CD8-positive, alpha-beta T cell (primary cell): ENCODE measurements at regions of chr5 and their contacts with region 1.

Region 1: DNA sequence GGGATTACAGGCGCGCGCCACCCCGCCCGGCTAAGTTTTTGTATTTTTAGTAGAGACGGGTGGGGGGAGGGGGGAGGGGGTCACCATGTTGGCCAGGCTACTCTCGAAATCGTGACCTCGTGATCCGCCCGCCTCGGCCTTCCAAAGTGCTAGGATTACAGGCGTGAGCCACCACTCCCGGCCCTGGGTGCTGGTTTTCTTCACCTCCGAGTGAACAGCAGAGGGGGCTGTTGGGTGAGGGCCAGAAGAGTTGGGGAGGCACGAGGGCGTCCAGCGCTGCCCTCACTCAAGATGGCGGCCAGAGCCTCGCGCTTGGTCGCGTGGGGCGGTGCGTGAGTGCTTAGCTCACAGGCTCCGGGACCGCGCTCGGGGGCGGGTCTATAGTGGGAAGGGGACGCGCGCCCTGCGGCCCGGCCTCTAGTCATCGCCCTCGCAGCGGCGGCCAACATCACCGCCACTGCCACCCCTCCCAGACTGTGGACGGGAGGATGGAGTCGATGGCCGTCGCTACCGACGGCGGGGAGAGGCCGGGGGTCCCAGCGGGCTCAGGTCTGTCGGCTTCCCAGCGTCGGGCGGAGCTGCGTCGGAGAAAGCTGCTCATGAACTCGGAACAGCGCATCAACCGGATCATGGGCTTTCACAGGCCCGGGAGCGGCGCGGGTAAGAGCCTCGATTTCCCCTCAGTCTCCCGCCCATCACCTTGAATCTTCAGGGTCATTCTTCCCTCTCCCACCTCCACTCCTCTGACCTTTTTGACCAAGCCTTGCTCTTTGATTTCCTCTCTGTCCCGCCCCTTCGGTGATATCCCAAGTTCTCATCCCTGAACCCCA is at the start of gene CAMLG:
- DNase-seq: peak; percentile 94 to 99 (median 97)
- ATAC-seq: peak; percentile 97
- H3K4me3 ChIP-seq: peak within 1 kb of the TSS; percentile 89 to 91
- H3K4me3 Mint-ChIP-seq: peak within 1 kb of the TSS; percentile 86
- H3K27ac ChIP-seq: peak within 1 kb of the TSS; percentile 79 to 92
- H3K27ac Mint-ChIP-seq: peak within 1 kb of the TSS; percentile 95
- H3K4me1 ChIP-seq: peaks cover 20% of the 10 kb centered on the region
- H3K4me1 Mint-ChIP-seq: peaks cover 35% of the 10 kb centered on the region
- H3K27me3 ChIP-seq: no peaks in the 10 kb centered on the region
- H3K27me3 Mint-ChIP-seq: no peaks in the 10 kb centered on the region
- CTCF ChIP-seq: peak; percentile 81
- total RNA-seq, gene CAMLG: 52.3 to 56.2 TPM

Region 2: GRCh38 chr5:133968049-133968980 is 770.0 kb before region 1 on chr5 and contains the start of gene C5orf15:
- CTCF ChIA-PET with region 1: no interaction called
- POLR2A ChIA-PET with region 1: no interaction called
- intact Hi-C with region 1: loop called (anchors 10 kb)
- DNase-seq: peak; percentile 76 to 98 (median 91)
- ATAC-seq: peak; percentile 93
- H3K4me3 ChIP-seq: peak within 1 kb of the TSS; percentile 85 to 93
- H3K4me3 Mint-ChIP-seq: peak within 1 kb of the TSS; percentile 93
- H3K27ac ChIP-seq: peak within 1 kb of the TSS; percentile 79 to 94
- H3K27ac Mint-ChIP-seq: peak within 1 kb of the TSS; percentile 97
- H3K4me1 ChIP-seq: peaks cover 23% of the 10 kb centered on the region
- H3K4me1 Mint-ChIP-seq: peaks cover 49% of the 10 kb centered on the region
- H3K27me3 ChIP-seq: no peaks in the 10 kb centered on the region
- H3K27me3 Mint-ChIP-seq: no peaks in the 10 kb centered on the region
- CTCF ChIP-seq: no peak
- total RNA-seq, gene C5orf15: 12.4 to 13.0 TPM

Region 3: GRCh38 chr5:134637161-134637582 is 101.2 kb before region 1 on chr5:
- CTCF ChIA-PET with region 1: no interaction called
- POLR2A ChIA-PET with region 1: interaction called, 6 read pairs
- intact Hi-C with region 1: loop called (anchors 1 to 2 kb)
- DNase-seq: no peak
- ATAC-seq: no peak
- H3K4me3 ChIP-seq: no peak overlapping the region
- H3K4me3 Mint-ChIP-seq: no peak overlapping the region
- H3K27ac ChIP-seq: no peak overlapping the region
- H3K27ac Mint-ChIP-seq: no peak overlapping the region
- H3K4me1 ChIP-seq: no peaks in the 10 kb centered on the region
- H3K4me1 Mint-ChIP-seq: peaks cover under 1% of the 10 kb centered on the region
- H3K27me3 ChIP-seq: no peaks in the 10 kb centered on the region
- H3K27me3 Mint-ChIP-seq: no peaks in the 10 kb centered on the region
- CTCF ChIP-seq: no peak

Region 4: DNA sequence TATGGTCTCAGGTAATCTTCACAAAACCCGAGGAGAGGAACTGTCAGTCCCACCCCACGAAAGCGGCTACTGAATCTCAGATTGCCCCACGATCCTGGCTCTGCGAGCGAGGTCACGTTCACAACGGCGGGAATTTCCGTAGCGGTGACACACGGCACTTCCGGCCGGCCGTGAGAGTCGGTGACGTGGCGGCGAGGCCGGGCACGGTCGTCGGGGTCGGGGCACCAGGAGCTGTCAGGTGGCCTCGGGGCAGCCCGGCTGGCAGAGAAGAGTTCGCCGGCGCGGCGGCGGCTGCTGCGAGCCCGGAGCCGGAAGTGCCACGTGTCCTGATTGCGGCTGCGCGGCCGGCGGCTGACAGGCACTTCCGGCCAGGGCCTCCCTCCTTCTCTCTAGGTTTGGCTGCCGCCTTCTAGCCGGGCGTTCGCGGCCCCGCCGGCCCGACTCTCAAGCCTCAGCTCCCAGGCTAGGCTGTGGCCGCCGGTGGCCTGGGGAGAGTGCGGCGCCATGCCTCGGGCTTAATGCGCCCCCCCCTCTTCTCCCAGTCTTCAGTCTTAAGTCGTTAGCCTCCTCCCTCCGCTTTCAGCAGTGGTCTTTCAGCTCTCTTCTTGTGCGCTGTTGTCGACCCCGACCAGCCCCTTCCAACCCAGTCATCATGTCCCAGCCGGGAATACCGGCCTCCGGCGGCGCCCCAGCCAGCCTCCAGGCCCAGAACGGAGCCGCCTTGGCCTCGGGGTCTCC is 89.8 kb before region 1 on chr5 and contains the start of gene SEC24A:
- CTCF ChIA-PET with region 1: no interaction called
- POLR2A ChIA-PET with region 1: no interaction called
- intact Hi-C with region 1: loop called (anchors 1 to 5 kb)
- DNase-seq: peak; percentile 75 to 98 (median 88)
- ATAC-seq: peak; percentile 77
- H3K4me3 ChIP-seq: peak within 1 kb of the TSS; percentile 74 to 98
- H3K4me3 Mint-ChIP-seq: peak within 1 kb of the TSS; percentile 96
- H3K27ac ChIP-seq: peak within 1 kb of the TSS; percentile 83 to 100
- H3K27ac Mint-ChIP-seq: peak within 1 kb of the TSS; percentile 99
- H3K4me1 ChIP-seq: peaks cover 12% of the 10 kb centered on the region
- H3K4me1 Mint-ChIP-seq: peaks cover 30% of the 10 kb centered on the region
- H3K27me3 ChIP-seq: no peaks in the 10 kb centered on the region
- H3K27me3 Mint-ChIP-seq: no peaks in the 10 kb centered on the region
- CTCF ChIP-seq: no peak
- total RNA-seq, gene SEC24A: 14.4 to 14.5 TPM

Region 5: DNA sequence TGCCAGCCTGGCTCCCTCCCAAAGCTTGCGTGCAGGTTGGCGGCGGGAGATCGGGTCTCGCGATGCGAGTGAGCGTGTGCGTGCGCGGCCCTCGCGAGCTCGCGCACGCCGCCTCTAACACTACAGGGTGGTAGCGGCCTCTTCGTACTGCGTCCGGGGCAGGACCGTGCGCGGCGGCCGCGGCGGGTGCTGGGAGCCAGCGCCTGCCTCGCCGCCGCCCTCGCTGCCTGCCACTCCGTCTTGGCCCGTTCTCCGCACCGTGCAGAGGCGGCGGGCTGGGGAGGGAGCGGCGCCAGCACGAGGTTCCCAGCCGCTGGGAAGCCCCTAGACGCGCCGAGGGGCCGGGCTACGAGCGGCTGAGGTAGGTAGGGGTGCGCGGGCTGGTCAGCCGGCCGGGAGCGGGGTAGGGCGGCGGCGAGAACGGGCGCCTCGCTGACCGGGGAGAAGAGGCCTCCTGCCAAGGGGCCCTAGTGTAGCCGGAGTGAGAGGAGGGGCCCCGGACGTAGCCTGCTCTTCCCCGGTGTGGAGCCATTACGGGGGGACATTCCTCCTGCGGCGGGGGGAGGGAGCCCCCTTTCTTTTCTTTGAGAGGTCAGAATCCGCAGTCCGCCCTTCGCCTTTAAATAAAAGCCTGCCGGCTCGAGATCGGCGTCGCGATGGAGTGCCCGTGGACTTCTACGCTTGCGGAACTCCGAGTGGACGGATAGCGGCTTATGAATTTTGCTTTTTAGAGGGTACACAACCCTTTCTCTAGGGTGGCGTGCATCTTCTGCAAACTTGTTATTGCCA is 107.7 kb after region 1 on chr5 and contains the start of gene C5orf24:
- CTCF ChIA-PET with region 1: interaction called, 5 read pairs
- POLR2A ChIA-PET with region 1: interaction called, 8 read pairs
- intact Hi-C with region 1: loop called (anchors 1 kb)
- DNase-seq: peak; percentile 82 to 98 (median 90)
- ATAC-seq: peak; percentile 92
- H3K4me3 ChIP-seq: peak within 1 kb of the TSS; percentile 85 to 94
- H3K4me3 Mint-ChIP-seq: peak within 1 kb of the TSS; percentile 87
- H3K27ac ChIP-seq: peak within 1 kb of the TSS; percentile 84 to 91
- H3K27ac Mint-ChIP-seq: peak within 1 kb of the TSS; percentile 94
- H3K4me1 ChIP-seq: peaks cover 18% of the 10 kb centered on the region
- H3K4me1 Mint-ChIP-seq: peaks cover 34% of the 10 kb centered on the region
- H3K27me3 ChIP-seq: no peaks in the 10 kb centered on the region
- H3K27me3 Mint-ChIP-seq: no peaks in the 10 kb centered on the region
- CTCF ChIP-seq: no peak
- total RNA-seq, gene C5orf24: 29.9 to 31.0 TPM

Region 6: GRCh38 chr5:134857401-134857800 is 119.1 kb after region 1 on chr5:
- CTCF ChIA-PET with region 1: no interaction called
- POLR2A ChIA-PET with region 1: no interaction called
- intact Hi-C with region 1: no loop called
- DNase-seq: no peak
- ATAC-seq: no peak
- H3K4me3 ChIP-seq: no peak overlapping the region
- H3K4me3 Mint-ChIP-seq: no peak overlapping the region
- H3K27ac ChIP-seq: no peak overlapping the region
- H3K27ac Mint-ChIP-seq: no peak overlapping the region
- H3K4me1 ChIP-seq: no peaks in the 10 kb centered on the region
- H3K4me1 Mint-ChIP-seq: peaks cover 30% of the 10 kb centered on the region
- H3K27me3 ChIP-seq: no peaks in the 10 kb centered on the region
- H3K27me3 Mint-ChIP-seq: no peaks in the 10 kb centered on the region
- CTCF ChIP-seq: no peak

Region 7: DNA sequence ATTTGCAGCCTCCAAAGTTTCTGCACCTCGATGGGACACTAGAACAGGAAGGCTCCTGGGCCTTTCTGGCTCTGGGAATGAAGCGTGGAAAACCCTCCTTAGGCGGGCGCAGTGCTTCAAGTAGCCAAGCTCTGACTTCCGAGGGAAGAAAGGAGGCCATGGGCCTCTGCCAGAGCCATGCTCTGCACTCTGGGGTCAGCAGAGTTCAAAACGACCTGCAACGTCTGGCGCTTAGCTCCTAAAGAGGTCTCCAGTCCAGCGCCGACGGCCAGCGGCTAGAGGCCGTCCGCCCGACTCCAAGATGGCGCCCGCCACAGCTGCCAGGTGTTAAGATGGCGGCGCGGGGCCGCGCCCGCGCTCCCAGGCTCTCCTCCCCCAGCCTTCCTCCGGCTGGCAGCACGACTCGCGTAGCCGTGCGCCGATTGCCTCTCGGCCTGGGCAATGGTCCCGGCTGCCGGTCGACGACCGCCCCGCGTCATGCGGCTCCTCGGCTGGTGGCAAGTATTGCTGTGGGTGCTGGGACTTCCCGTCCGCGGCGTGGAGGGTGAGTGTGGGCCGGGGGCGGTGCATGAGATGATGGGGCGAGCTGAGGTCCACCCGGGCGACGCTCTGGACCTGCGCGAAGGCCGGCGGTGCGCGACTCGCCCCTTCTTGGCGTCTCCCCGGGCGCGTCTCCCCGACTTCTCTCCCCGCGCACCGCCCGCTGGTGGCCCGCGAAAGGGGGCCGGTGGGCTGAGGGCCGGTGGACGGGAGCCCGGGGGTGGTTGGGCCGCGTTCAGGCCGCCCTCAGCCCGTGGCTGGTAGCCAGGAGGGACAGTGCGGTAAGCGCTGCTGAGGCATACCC is 135.9 kb after region 1 on chr5 and contains the start of gene TXNDC15:
- CTCF ChIA-PET with region 1: interaction called, 8 read pairs
- POLR2A ChIA-PET with region 1: interaction called, 4 read pairs
- intact Hi-C with region 1: loop called (anchors 1 kb)
- DNase-seq: peak; percentile 61 to 91 (median 80)
- ATAC-seq: peak; percentile 92
- H3K4me3 ChIP-seq: peak within 1 kb of the TSS; percentile 59 to 92
- H3K4me3 Mint-ChIP-seq: peak within 1 kb of the TSS; percentile 92
- H3K27ac ChIP-seq: peak within 1 kb of the TSS; percentile 67 to 96
- H3K27ac Mint-ChIP-seq: peak within 1 kb of the TSS; percentile 94
- H3K4me1 ChIP-seq: peaks cover 36% of the 10 kb centered on the region
- H3K4me1 Mint-ChIP-seq: peaks cover 40% of the 10 kb centered on the region
- H3K27me3 ChIP-seq: no peaks in the 10 kb centered on the region
- H3K27me3 Mint-ChIP-seq: no peaks in the 10 kb centered on the region
- CTCF ChIP-seq: no peak
- total RNA-seq, gene TXNDC15: 19.8 to 21.0 TPM